Endothelial cell of umbilical vein (primary cell): ENCODE measurements at regions of chr14 and their contacts with region 1.

Region 1: GRCh38 chr14:67883717-67884116 is 64.1 kb downstream of the RAD51B start:
- DNase-seq: peak; percentile 44
- H3K4me3 ChIP-seq: no peak overlapping the region
- H3K27ac ChIP-seq: no peak overlapping the region
- H3K4me1 ChIP-seq: peaks cover 5% of the 10 kb centered on the region
- H3K27me3 ChIP-seq: no peaks in the 10 kb centered on the region
- CTCF ChIP-seq: no peak
- POLR2A ChIP-seq: no peak

Region 2: GRCh38 chr14:68816262-68816942 is 932.7 kb after region 1 on chr14:
- CTCF ChIA-PET with region 1: interaction called, 30 read pairs
- POLR2A ChIA-PET with region 1: no interaction called
- dilution Hi-C with region 1: no loop called
- intact Hi-C with region 1: loop called (anchors 2 kb)
- DNase-seq: peak; percentile 89
- H3K4me3 ChIP-seq: peak overlapping the region in 1 of 3 experiments; percentile 24
- H3K27ac ChIP-seq: peak overlapping the region; percentile 71
- H3K4me1 ChIP-seq: peaks cover 21% of the 10 kb centered on the region
- H3K27me3 ChIP-seq: no peaks in the 10 kb centered on the region
- CTCF ChIP-seq: peak; percentile 95
- POLR2A ChIP-seq: peak; percentile 46

Region 3: DNA sequence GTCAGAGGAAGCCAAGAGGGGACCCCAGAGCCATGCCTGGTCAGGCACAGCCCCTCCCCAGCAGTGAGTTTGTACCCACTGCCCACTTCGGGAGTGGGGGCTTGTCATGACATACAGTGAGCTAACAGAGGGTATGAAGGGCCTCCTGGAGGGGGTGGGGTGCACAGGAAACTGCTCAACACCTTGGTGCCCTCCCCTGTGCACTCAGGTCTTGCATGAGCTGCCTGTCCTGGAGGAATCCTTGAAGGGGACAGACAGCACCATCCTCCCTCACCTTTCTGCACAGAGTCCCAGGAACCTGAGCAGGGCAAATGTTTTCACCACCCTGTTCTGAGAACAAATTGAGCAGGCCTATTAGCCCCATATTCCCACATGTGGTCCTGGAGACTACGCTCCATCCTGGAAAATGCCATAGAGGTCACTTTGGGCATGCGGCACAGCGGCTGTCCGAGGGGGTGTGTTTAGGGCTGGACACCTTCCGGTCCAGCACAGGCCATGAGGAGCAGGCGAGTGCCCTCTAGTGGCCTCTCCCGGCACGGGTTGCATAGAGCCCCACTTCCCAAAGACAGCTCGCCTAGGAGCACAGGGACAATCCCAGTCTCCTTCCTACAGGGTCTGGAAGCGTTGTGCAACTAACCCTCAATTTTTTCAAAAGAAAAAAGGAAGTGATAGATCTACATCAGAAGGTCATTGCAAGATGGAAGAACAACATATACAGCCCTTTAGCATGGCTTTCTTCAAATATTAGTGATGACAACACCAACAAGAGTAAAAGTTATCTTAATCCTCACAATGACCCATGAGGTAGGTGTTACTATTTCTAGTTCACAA is 941.0 kb after region 1 on chr14:
- CTCF ChIA-PET with region 1: interaction called, 44 read pairs
- POLR2A ChIA-PET with region 1: no interaction called
- dilution Hi-C with region 1: no loop called
- intact Hi-C with region 1: no loop called
- DNase-seq: peak; percentile 66
- H3K4me3 ChIP-seq: no peak overlapping the region
- H3K27ac ChIP-seq: no peak overlapping the region
- H3K4me1 ChIP-seq: no peaks in the 10 kb centered on the region
- H3K27me3 ChIP-seq: no peaks in the 10 kb centered on the region
- CTCF ChIP-seq: peak; percentile 92 to 95
- POLR2A ChIP-seq: no peak

Region 4: DNA sequence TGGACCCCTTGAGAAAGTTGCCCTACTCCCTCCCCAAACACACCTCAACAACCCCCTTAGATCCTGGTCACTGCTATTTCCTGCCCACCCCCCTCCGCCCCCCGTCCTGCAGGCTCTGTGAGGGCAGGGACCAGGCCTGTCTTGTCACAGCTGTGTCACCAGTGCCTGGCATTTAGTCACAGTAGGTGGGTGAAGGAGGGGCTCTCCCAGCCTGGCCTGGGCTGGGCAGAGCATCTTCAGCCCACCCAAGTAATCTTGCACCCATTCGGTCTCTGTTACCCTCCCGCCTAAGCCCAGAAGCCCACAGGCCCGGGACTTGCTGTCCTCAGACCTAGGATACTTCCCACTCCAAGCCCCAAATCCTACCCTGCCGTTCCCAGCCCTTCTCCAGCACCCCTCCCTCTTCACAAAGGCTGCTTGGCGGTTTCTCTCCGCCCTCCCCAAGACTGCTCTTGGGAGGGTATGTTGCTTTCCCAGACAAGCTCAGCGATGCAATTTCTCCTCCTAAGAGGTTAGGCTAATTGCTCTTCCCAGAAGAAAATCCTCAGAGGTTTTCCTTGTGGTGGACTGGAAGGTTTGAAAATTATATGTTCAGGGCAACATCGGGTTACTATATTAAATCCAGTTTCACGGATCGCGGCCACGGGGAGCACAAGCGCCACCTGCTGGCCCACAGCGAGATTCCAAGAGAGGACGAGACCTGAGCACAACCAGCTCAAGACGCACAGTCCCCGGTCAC is 959.9 kb after region 1 on chr14:
- CTCF ChIA-PET with region 1: interaction called, 68 read pairs
- POLR2A ChIA-PET with region 1: no interaction called
- dilution Hi-C with region 1: no loop called
- intact Hi-C with region 1: loop called (anchors 2 kb)
- DNase-seq: peak; percentile 75
- H3K4me3 ChIP-seq: no peak overlapping the region
- H3K27ac ChIP-seq: no peak overlapping the region
- H3K4me1 ChIP-seq: peaks cover 14% of the 10 kb centered on the region
- H3K27me3 ChIP-seq: no peaks in the 10 kb centered on the region
- CTCF ChIP-seq: peak; percentile 92 to 95
- POLR2A ChIP-seq: no peak